CD4-positive, alpha-beta memory T cell (primary cell): ENCODE measurements at regions of chr7 and their contacts with region 1.

Region 1: DNA sequence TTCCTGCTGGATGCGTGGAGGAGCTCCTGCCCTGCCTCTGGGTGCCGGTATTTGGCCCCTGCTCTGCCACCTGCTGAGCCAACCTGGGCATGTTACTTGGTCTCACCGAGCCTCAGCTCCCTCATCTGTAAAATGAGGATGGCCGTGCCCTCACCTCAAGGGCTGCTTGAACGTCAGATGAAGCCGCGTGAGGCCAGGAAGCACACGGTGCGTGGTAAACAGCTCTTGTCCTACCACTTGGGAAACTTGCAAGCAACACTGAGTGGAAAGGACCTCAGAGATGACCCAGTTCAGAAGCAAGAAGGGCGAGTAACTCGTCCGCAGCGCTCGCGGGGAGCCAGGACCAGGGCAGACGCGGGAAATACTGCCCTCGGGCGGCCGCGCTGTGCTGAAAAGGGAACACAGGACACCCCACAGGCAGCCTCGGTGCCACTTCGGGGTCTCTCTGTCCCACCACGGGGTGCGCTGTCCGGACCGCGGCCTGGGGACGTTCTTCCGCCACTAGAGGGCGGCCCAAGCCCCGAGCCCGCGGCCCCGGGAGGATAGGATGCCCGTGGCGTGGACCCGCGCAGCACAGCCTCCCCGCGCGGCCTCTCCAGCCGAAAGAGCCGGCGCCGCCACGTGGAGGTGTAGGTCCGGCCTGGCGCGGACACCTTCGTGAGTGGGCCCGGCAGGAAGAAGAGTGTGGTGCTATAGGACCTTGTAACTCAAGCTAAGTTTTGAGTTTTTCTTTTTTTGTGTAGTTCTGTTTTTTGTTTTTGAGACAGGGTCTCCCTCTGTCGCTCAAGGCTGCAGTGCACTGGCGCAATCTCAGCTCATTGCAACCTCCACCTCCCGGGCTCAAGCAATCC is 94.1 kb downstream of the PRKAG2 start:
- DNase-seq: peak; percentile 44 to 62 (median 53)
- H3K4me3 ChIP-seq: peak overlapping the region in 1 of 2 donors; percentile 5
- H3K4me3 Mint-ChIP-seq: peak overlapping the region; percentile 82 to 96 (median 86)
- H3K27ac ChIP-seq: no peak overlapping the region
- H3K27ac Mint-ChIP-seq: peak overlapping the region; percentile 57 to 95 (median 88)
- H3K4me1 ChIP-seq: peaks cover 12% of the 10 kb centered on the region
- H3K4me1 Mint-ChIP-seq: peaks cover 7 to 21% (median 14%) of the 10 kb centered on the region in 4 donors
- H3K27me3 ChIP-seq: no peaks in the 10 kb centered on the region
- H3K27me3 Mint-ChIP-seq: no peaks in the 10 kb centered on the region

Region 2: DNA sequence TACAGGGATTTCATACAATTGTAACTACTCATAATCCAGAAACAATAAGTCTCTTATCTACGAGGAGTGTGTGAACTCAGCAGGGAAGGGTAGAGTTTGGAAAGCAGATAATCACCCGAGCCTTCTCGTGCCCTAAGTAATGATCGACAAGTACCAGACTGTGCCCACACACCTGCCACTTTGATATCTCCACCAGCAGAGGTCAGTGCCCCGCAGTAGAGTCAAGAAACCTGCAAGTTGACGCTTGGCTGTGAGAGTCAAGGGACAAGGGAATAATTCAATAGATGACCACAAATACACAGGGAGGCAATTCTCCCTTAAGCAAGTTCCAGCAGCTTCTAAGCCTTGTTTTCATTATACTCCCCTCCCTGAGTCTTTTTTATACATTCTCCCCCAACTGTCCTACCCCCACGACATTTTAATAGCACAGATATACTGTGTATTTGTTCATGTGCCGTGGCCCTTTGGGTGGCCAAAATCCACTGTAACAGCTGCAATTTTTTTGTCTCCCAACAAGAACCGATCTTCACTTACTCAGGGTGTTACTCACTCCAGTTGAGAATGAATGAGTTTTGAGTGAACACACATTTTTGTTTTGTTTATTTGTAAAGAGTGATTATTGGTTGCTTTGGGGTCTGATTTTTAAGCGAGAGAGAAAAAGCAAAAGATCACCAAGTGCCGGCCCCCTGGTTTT is 156.3 kb before region 1 on chr7:
- CTCF ChIA-PET with region 1: interaction called, 5 read pairs
- POLR2A ChIA-PET with region 1: no interaction called
- intact Hi-C with region 1: loop called (anchors 10 kb)
- DNase-seq: peak in 3 of 5 donors; percentile 15 to 17 (median 16)
- H3K4me3 ChIP-seq: no peak overlapping the region
- H3K4me3 Mint-ChIP-seq: no peak overlapping the region
- H3K27ac ChIP-seq: no peak overlapping the region
- H3K27ac Mint-ChIP-seq: no peak overlapping the region
- H3K4me1 ChIP-seq: peaks cover 12% of the 10 kb centered on the region
- H3K4me1 Mint-ChIP-seq: peaks cover 31 to 46% (median 37%) of the 10 kb centered on the region in 4 donors
- H3K27me3 ChIP-seq: no peaks in the 10 kb centered on the region
- H3K27me3 Mint-ChIP-seq: no peaks in the 10 kb centered on the region

Region 3: GRCh38 chr7:151759591-151760042 is 23.2 kb before region 1 on chr7:
- CTCF ChIA-PET with region 1: interaction called, 45 read pairs
- POLR2A ChIA-PET with region 1: no interaction called
- intact Hi-C with region 1: no loop called
- DNase-seq: peak; percentile 50 to 59 (median 58)
- H3K4me3 ChIP-seq: no peak overlapping the region
- H3K4me3 Mint-ChIP-seq: no peak overlapping the region
- H3K27ac ChIP-seq: no peak overlapping the region
- H3K27ac Mint-ChIP-seq: peak overlapping the region in 6 of 7 donors; percentile 41 to 79 (median 56)
- H3K4me1 ChIP-seq: peaks cover 19% of the 10 kb centered on the region
- H3K4me1 Mint-ChIP-seq: peaks cover 9 to 37% (median 29%) of the 10 kb centered on the region in 4 donors
- H3K27me3 ChIP-seq: no peaks in the 10 kb centered on the region
- H3K27me3 Mint-ChIP-seq: no peaks in the 10 kb centered on the region

Region 4: GRCh38 chr7:151795168-151795811 is 12.5 kb after region 1 on chr7:
- CTCF ChIA-PET with region 1: interaction called, 30 read pairs
- POLR2A ChIA-PET with region 1: interaction called, 7 read pairs
- intact Hi-C with region 1: no loop called
- DNase-seq: peak; percentile 30 to 85 (median 41)
- H3K4me3 ChIP-seq: no peak overlapping the region
- H3K4me3 Mint-ChIP-seq: peak overlapping the region in 7 of 8 donors; percentile 46 to 82 (median 71)
- H3K27ac ChIP-seq: no peak overlapping the region
- H3K27ac Mint-ChIP-seq: peak overlapping the region; percentile 57 to 89 (median 84)
- H3K4me1 ChIP-seq: peaks cover 17% of the 10 kb centered on the region
- H3K4me1 Mint-ChIP-seq: peaks cover 9 to 33% (median 20%) of the 10 kb centered on the region in 4 donors
- H3K27me3 ChIP-seq: no peaks in the 10 kb centered on the region
- H3K27me3 Mint-ChIP-seq: no peaks in the 10 kb centered on the region

Region 5: DNA sequence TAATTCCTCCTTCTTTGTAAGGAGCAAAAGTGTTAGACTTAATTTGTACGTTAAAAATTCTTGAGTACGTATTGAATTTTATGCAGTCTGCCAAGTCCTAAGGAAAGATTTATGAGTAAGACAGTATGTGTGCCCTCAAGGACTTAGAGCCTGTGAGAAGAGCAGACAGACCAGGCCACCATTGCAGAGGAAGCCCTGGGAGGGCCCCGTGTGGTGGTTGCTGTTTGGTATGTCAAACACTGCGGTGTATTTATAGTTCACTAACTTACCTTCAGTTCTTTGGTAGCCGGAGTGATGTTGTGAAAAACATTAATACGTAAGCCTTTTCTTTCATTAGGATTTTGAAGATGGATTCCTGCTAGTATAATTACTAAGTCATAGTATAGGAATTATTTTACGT is 325.5 kb after region 1 on chr7:
- CTCF ChIA-PET with region 1: no interaction called
- POLR2A ChIA-PET with region 1: no interaction called
- intact Hi-C with region 1: no loop called
- DNase-seq: no peak
- H3K4me3 ChIP-seq: no peak overlapping the region
- H3K4me3 Mint-ChIP-seq: no peak overlapping the region
- H3K27ac ChIP-seq: no peak overlapping the region
- H3K27ac Mint-ChIP-seq: peak overlapping the region in 1 of 7 donors; percentile 41
- H3K4me1 ChIP-seq: no peaks in the 10 kb centered on the region
- H3K4me1 Mint-ChIP-seq: peaks cover 0 to 4% (median 1%) of the 10 kb centered on the region in 4 donors
- H3K27me3 ChIP-seq: no peaks in the 10 kb centered on the region
- H3K27me3 Mint-ChIP-seq: no peaks in the 10 kb centered on the region

Region 6: DNA sequence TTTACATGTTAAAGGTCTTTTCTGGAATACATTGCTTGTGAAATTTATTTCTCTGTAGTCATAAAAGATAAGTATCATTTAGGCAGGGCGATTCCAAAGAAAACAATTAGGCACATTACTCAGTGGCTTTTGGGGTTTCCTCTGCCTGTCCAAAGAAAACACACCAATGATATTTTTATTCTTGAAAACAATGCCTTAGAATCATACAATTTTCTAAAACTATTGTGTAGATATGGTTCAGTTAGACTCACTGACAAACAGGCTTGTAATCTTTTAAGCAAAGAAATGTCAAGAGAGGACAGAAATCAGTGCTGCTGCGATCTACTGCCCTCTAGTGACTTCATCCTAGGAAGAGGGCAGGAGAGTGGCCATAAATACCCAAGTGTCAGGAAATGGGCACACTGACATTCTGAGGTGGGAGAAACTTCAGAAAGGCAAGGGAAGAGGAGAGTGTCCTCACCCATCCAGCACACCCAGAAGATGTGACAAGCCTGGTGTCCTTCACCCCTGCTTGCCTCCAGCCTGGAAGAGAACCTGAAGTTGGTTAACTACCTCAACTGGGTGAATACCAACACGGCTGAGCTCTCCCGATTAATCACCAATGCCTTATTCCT is 363.1 kb after region 1 on chr7:
- CTCF ChIA-PET with region 1: interaction called, 17 read pairs
- POLR2A ChIA-PET with region 1: no interaction called
- intact Hi-C with region 1: loop called (anchors 1 kb)
- DNase-seq: peak in 4 of 5 donors; percentile 41 to 45 (median 44)
- H3K4me3 ChIP-seq: peak overlapping the region in 1 of 2 donors; percentile 2
- H3K4me3 Mint-ChIP-seq: peak overlapping the region in 6 of 8 donors; percentile 46 to 83 (median 72)
- H3K27ac ChIP-seq: no peak overlapping the region
- H3K27ac Mint-ChIP-seq: peak overlapping the region; percentile 48 to 95 (median 89)
- H3K4me1 ChIP-seq: peaks cover 47% of the 10 kb centered on the region
- H3K4me1 Mint-ChIP-seq: peaks cover 38 to 48% (median 42%) of the 10 kb centered on the region in 4 donors
- H3K27me3 ChIP-seq: no peaks in the 10 kb centered on the region
- H3K27me3 Mint-ChIP-seq: no peaks in the 10 kb centered on the region